Gastrocnemius medialis (tissue), 4 donors: ENCODE measurements at regions of chr3 and their contacts with region 1.

Region 1: GRCh38 chr3:47989981-47990440 is 26.2 kb downstream of the MAP4 start:
- DNase-seq: peak; percentile 90 to 94
- ATAC-seq: peak; percentile 98 to 99
- H3K4me3 ChIP-seq: peak overlapping the region in 1 of 4 donors; percentile 14
- H3K27ac ChIP-seq: peak overlapping the region; percentile 80 to 87 (median 81)
- H3K4me1 ChIP-seq: peaks cover 49 to 53% of the 10 kb centered on the region in 2 donors
- H3K27me3 ChIP-seq: no peaks in the 10 kb centered on the region
- CTCF ChIP-seq: peak; percentile 93 to 96 (median 94)
- POLR2A ChIP-seq: no peak

Region 2: DNA sequence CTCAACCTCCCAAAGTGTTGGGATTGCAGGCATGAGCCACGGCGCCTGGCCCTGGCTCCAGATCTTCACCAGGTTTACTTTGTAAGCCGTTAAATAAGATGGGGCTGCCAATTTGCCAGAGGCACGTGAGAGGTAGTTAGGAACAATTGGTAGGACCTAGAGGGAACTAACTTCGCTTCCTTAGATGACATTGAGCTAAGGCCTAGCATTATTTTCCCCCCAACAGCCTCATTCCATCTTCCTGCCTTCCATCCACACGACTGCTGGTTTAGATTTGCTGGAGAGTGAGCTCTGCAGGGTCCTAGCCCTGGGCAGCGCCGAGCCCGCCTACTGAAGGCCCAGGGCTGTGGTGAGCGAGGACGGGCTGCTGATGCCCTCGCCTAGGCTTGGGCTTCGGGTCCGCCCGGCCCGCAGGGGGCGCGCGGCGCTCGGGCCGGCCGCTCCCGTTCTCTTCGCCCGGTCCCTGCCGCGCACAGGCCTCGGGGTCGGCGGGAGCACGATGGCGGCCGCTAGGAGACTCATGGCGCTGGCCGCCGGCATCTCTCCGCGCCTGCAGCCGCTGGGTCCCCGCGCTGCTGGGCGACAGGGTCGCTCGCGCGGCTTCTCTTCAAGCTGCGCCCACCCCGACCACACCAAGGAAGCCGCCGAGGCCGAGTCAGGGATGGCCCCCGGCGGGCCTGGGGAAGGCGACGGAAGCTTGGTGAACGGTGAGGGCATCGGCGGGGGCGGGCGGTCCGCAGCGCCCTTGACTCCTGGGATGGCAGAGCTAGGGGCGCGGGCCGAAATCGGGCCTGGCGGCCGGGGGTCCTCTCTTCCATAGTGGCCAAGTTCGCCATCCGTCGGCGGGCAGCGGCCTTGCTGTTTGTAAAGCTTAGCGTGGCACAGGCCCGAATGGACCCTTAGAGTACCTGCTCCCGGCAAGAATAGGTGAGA is 165.2 kb before region 1 on chr3:
- in situ Hi-C with region 1: loop called in 3 of 4 experiments (anchors 10 kb)
- intact Hi-C with region 1: loop called (anchors 1 kb)
- DNase-seq: peak in 1 of 2 donors; percentile 70
- ATAC-seq: peak; percentile 95
- H3K4me3 ChIP-seq: peak overlapping the region; percentile 74 to 95 (median 88)
- H3K27ac ChIP-seq: peak overlapping the region; percentile 86 to 92 (median 89)
- H3K4me1 ChIP-seq: peaks cover 13 to 18% of the 10 kb centered on the region in 2 donors
- H3K27me3 ChIP-seq: no peaks in the 10 kb centered on the region
- CTCF ChIP-seq: peak; percentile 68 to 92 (median 86)
- POLR2A ChIP-seq: peak in 1 of 2 donors; percentile 27

Region 3: GRCh38 chr3:47856669-47857068 is 133.3 kb before region 1 on chr3:
- in situ Hi-C with region 1: no loop called
- intact Hi-C with region 1: loop called (anchors 5 kb)
- DNase-seq: peak; percentile 62 to 93
- ATAC-seq: peak; percentile 71 to 77
- H3K4me3 ChIP-seq: no peak overlapping the region
- H3K27ac ChIP-seq: peak overlapping the region; percentile 75 to 90 (median 82)
- H3K4me1 ChIP-seq: peaks cover 35 to 37% of the 10 kb centered on the region in 2 donors
- H3K27me3 ChIP-seq: no peaks in the 10 kb centered on the region
- CTCF ChIP-seq: no peak
- POLR2A ChIP-seq: no peak

Region 4: GRCh38 chr3:48013288-48013980 is 23.4 kb after region 1 on chr3:
- in situ Hi-C with region 1: no loop called
- intact Hi-C with region 1: loop called (anchors 2 kb)
- DNase-seq: peak; percentile 61 to 81
- ATAC-seq: peak; percentile 86
- H3K4me3 ChIP-seq: peak overlapping the region; percentile 43 to 66 (median 56)
- H3K27ac ChIP-seq: peak overlapping the region; percentile 90 to 96 (median 92)
- H3K4me1 ChIP-seq: peaks cover 70 to 84% of the 10 kb centered on the region in 2 donors
- H3K27me3 ChIP-seq: no peaks in the 10 kb centered on the region
- CTCF ChIP-seq: no peak
- POLR2A ChIP-seq: peak in 1 of 2 donors; percentile 88

Region 5: GRCh38 chr3:48151058-48151806 is 161.2 kb after region 1 on chr3:
- in situ Hi-C with region 1: loop called (anchors 10 to 25 kb)
- intact Hi-C with region 1: loop called (anchors 1 kb)
- DNase-seq: peak; percentile 65 to 78
- ATAC-seq: peak; percentile 96 to 99
- H3K4me3 ChIP-seq: no peak overlapping the region
- H3K27ac ChIP-seq: peak overlapping the region; percentile 25 to 62 (median 58)
- H3K4me1 ChIP-seq: peaks cover 0 to 13% of the 10 kb centered on the region in 2 donors
- H3K27me3 ChIP-seq: no peaks in the 10 kb centered on the region
- CTCF ChIP-seq: peak; percentile 81 to 87 (median 86)
- POLR2A ChIP-seq: no peak